Activated B cell treated with CpG ODN at 0.5 μM for 24 hours (primary cell): ENCODE measurements at regions of chr1 and their contacts with region 1.

Region 1: GRCh38 chr1:869499-870244 is 54.1 kb upstream of the SAMD11 start:
- DNase-seq: peak; percentile 90
- ATAC-seq: peak; percentile 81
- H3K4me3 Mint-ChIP-seq: peak overlapping the region; percentile 48
- H3K27ac Mint-ChIP-seq: no peak overlapping the region
- H3K4me1 Mint-ChIP-seq: peaks cover 35% of the 10 kb centered on the region
- H3K27me3 Mint-ChIP-seq: peaks cover 11% of the 10 kb centered on the region
- CTCF ChIP-seq: peak; percentile 37

Region 2: DNA sequence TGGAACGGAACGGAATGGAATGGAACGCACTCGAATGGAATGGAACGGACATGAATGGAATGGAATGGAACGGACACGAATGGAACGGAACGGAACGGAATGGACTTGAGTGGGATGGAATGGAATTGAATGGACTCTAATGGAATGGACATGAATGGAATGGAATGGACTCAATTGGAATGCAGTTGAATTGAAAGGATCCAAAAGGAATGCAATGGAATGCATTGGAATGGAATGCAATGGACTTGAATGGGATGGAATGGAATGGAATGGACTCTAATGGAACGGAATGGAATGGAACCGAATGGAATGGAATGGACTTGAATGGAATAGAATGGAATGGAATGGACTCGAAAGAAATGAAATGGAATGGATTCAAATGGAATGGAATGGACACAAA is 80.8 kb before region 1 on chr1:
- CTCF ChIA-PET with region 1: no interaction called
- POLR2A ChIA-PET with region 1: no interaction called
- intact Hi-C with region 1: no loop called
- DNase-seq: no peak
- ATAC-seq: no peak
- H3K4me3 Mint-ChIP-seq: no peak overlapping the region
- H3K27ac Mint-ChIP-seq: no peak overlapping the region
- H3K4me1 Mint-ChIP-seq: no peaks in the 10 kb centered on the region
- H3K27me3 Mint-ChIP-seq: no peaks in the 10 kb centered on the region
- CTCF ChIP-seq: no peak

Region 3: GRCh38 chr1:975896-976683 is 106.4 kb after region 1 on chr1:
- CTCF ChIA-PET with region 1: no interaction called
- POLR2A ChIA-PET with region 1: no interaction called
- intact Hi-C with region 1: loop called (anchors 1 kb)
- DNase-seq: peak; percentile 64
- ATAC-seq: peak; percentile 90
- H3K4me3 Mint-ChIP-seq: no peak overlapping the region
- H3K27ac Mint-ChIP-seq: no peak overlapping the region
- H3K4me1 Mint-ChIP-seq: peaks cover 4% of the 10 kb centered on the region
- H3K27me3 Mint-ChIP-seq: peaks cover 24% of the 10 kb centered on the region
- CTCF ChIP-seq: no peak